WTC11 (cell line): ENCODE measurements at regions of chr2 and their contacts with region 1.

Region 1: DNA sequence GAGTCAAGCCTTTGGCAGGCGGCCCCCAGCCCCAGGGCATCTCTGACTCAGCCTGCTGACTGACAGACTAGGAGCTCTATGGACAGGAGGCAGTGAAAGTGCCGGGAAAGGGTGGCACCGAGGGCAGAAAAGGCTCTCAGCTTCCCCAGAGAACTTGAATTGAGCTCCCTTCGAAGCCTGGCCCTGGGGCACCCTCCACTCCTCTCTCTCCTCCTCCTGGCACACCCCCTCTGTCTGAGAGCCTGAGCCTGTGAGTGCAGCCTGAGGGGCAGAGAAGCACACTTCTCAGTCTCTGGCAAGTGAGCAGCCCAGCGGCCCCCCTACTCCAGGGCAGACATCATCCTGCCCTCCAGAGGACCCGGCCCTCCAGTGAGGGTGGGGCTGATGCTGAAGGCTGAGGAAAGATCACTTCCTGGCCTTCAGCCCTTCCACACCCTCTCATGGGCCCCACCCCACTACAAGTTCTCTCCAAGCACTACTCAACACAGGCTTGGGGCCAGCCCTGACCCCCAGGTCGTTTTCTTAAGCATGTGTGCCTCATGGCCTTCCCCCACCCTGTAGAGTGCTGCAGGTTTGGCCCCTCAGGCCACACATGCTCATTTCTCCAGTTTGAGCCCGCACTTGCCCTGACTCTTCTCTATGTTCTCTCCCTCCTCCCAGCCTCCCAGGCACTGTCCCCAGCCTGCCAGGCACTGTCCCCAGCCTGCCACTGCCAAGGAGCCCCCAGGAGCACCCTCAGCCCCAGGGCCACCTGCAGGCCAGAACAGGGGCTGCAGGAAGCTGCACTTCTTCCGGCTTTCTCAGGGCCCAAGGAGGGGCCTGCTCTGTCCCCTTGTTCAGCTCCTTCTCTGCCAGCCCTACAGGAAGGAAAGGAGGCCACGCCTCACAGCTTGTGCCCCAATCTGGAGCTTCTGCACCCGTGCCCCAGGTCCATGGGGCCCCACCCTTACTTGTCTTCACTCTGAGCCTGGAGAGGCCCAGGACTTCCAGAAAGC is 31.8 kb downstream of the CYP26B1 start:
- DNase-seq: peak; percentile 64
- ATAC-seq: peak; percentile 97
- H3K4me3 Mint-ChIP-seq: no peak overlapping the region
- H3K27ac Mint-ChIP-seq: no peak overlapping the region
- H3K4me1 Mint-ChIP-seq: peaks cover 3% of the 10 kb centered on the region; the same call in 1 of the 2 replicates
- H3K27me3 Mint-ChIP-seq: peaks cover 6% of the 10 kb centered on the region
- CTCF ChIP-seq: peak; percentile 57; the same call in 1 of the 2 replicates

Region 2: DNA sequence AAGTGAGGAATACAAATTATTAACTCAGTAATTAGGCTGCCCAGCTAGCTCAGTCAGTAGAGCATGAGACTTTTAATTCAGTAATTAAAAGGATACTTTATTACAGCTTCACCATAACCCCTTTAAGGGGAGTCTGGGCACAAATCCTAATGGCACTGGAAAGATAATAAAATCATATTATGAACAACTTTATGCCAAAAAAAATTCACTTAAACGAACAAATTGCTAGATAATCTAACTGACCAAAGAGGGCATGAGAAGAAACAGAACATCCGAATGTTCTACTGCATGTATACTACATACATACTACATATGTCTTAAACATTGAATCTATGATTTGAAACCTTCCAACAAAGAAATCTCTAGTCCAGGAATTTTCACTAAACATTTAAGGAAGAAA is 127.7 kb before region 1 on chr2:
- CTCF ChIA-PET with region 1: no interaction called
- POLR2A ChIA-PET with region 1: no interaction called
- DNase-seq: no peak
- ATAC-seq: no peak
- H3K4me3 Mint-ChIP-seq: no peak overlapping the region
- H3K27ac Mint-ChIP-seq: no peak overlapping the region
- H3K4me1 Mint-ChIP-seq: peaks cover 18% of the 10 kb centered on the region
- H3K27me3 Mint-ChIP-seq: no peaks in the 10 kb centered on the region; the same call in 1 of the 2 replicates
- CTCF ChIP-seq: no peak

Region 3: DNA sequence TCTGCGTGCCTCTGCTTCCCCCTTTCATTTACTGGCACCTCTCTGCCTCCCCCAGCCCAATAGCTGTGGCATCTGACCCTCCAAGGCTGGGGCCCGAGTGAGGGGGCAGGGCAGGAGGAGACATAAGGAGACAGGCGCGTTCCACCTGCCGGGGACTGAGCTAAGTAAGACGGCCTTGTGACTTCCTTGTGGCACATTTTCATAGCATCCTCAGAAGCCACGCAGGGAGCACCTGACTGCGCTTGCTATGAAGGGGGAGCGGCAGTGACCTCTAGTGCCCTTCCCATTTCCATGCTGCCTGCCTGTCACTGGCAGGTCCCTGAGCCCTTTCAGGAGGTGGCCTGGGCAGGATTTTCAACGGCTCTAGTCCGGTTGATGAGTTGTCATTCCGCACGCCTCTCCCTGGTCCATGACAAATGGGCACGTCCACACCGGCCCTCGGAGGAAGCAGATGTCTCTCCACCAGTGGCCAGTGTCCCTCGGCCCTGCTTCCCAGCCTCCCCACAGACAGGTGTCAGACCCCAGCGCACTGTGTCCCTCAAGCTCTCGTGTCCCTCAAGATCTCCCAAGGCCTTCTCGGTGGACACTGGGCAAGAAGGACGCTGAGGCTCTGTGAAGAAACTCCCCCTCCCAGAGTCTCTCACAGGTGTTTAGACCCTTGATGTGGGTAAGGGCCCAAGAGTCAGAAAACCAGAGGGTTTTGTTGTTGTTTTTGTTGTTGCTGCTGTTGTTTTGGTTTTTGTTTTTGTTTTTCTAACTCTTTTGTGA is 10.8 kb before region 1 on chr2:
- CTCF ChIA-PET with region 1: interaction called, 16 read pairs
- POLR2A ChIA-PET with region 1: no interaction called
- DNase-seq: peak; percentile 53
- ATAC-seq: peak; percentile 88
- H3K4me3 Mint-ChIP-seq: no peak overlapping the region
- H3K27ac Mint-ChIP-seq: no peak overlapping the region
- H3K4me1 Mint-ChIP-seq: 0 out of 2 replicates have a peak, but pooled peaks cover 2% of the 10 kb centered on the region
- H3K27me3 Mint-ChIP-seq: peaks cover 3% of the 10 kb centered on the region; the same call in 1 of the 2 replicates
- CTCF ChIP-seq: no peak

Region 4: GRCh38 chr2:72129681-72130340 is 14.0 kb after region 1 on chr2:
- CTCF ChIA-PET with region 1: interaction called, 18 read pairs
- POLR2A ChIA-PET with region 1: no interaction called
- DNase-seq: no peak
- ATAC-seq: no peak
- H3K4me3 Mint-ChIP-seq: no peak overlapping the region
- H3K27ac Mint-ChIP-seq: no peak overlapping the region
- H3K4me1 Mint-ChIP-seq: peaks cover 23% of the 10 kb centered on the region
- H3K27me3 Mint-ChIP-seq: peaks cover 2% of the 10 kb centered on the region; the same call in 1 of the 2 replicates
- CTCF ChIP-seq: no peak

Region 5: DNA sequence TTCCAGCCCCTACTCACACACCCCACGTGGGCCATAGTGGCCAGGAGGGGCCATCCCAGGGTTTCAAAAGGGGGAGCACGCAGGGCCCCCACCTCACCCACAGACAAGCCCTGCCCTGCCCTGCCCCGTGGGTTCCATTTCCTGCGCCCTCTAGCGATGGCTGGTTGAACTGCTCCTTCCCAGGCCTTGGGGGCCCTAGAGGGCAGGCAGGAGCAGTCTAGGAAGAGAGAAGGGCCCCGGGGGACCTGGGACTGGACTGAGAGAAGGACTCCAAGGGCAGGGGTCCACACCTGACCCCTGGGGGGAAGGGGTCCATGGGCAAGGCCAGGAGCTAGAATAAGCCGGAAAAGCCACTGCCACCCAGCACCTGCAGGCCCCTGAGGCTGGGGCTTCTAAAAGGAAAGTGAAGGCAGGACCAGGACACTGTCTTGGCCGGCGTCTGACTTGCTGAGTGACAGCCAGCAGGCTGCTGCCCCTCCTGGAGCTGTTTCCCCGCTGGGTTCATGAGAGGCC is 21.7 kb after region 1 on chr2:
- CTCF ChIA-PET with region 1: interaction called, 19 read pairs
- POLR2A ChIA-PET with region 1: no interaction called
- DNase-seq: peak; percentile 91
- ATAC-seq: peak; percentile 89
- H3K4me3 Mint-ChIP-seq: no peak overlapping the region
- H3K27ac Mint-ChIP-seq: no peak overlapping the region
- H3K4me1 Mint-ChIP-seq: peaks cover 8% of the 10 kb centered on the region
- H3K27me3 Mint-ChIP-seq: peaks cover 39% of the 10 kb centered on the region
- CTCF ChIP-seq: peak; percentile 97